Aorta (tissue), 5 donors: ENCODE measurements at regions of chr14 and their contacts with region 1.

Region 1: GRCh38 chr14:38098074-38098836 is 109.4 kb upstream of the SSTR1 start:
- DNase-seq: peak in 1 of 2 donors; percentile 34
- ATAC-seq: no peak
- H3K4me3 ChIP-seq: no peak overlapping the region
- H3K27ac ChIP-seq: no peak overlapping the region
- H3K4me1 ChIP-seq: no peaks in the 10 kb centered on the region
- H3K27me3 ChIP-seq: no peaks in the 10 kb centered on the region

Region 2: GRCh38 chr14:37985826-37986470 is 112.3 kb before region 1 on chr14:
- intact Hi-C with region 1: loop called in 1 of 2 experiments (anchors 10 kb)
- DNase-seq: no peak
- ATAC-seq: no peak
- H3K4me3 ChIP-seq: no peak overlapping the region
- H3K27ac ChIP-seq: no peak overlapping the region
- H3K4me1 ChIP-seq: no peaks in the 10 kb centered on the region
- H3K27me3 ChIP-seq: no peaks in the 10 kb centered on the region

Region 3: GRCh38 chr14:38047195-38047902 is 50.9 kb before region 1 on chr14:
- intact Hi-C with region 1: loop called in 1 of 2 experiments (anchors 2 kb)
- DNase-seq: no peak
- ATAC-seq: no peak
- H3K4me3 ChIP-seq: no peak overlapping the region
- H3K27ac ChIP-seq: no peak overlapping the region
- H3K4me1 ChIP-seq: no peaks in the 10 kb centered on the region
- H3K27me3 ChIP-seq: no peaks in the 10 kb centered on the region